AG04449 (cell line): ENCODE measurements at regions of chr11 and their contacts with region 1.

Region 1: GRCh38 chr11:9314291-9315036 is at the start of gene TMEM41B:
- DNase-seq: peak; percentile 90
- H3K4me3 ChIP-seq: peak within 1 kb of the TSS; percentile 94
- CTCF ChIP-seq: no peak

Region 2: DNA sequence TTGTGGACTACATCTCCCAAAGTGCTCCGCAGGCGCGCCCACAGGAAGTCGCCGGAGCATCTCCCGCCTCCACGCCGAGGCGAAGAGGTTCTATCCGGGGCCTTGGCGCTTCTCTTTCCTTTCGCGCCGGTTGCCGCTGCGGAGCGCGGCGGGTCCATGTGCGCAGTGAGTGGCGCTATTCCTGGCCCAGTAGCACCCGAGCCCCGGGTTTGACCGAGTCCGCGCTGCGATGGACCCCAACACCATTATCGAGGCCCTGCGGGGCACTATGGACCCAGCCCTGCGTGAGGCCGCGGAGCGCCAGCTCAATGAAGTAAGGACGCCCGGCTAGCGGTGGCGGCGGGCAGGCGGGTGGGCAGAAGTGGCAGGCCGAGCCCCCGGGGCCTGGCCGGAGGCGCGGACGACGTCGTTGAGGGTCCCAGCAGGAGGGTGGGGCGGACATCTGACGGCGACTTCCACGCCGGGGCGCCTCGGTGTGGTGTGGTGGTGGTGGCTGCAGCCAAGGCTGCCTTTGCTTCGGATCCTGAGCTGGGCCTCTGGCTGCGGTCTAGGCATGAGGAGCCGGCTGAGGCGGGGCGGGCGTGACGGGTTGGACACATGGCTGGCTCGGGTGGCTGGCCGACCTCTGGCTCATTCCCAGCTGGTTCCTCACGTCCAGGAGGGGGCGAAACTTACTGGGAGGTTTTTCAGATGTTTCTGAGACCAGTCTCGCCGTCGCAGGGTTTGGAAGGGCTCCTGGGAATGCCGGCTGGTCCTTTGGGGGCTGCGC is 70.3 kb after region 1 on chr11 and contains the start of gene IPO7:
- CTCF ChIA-PET with region 1: interaction called, 5 read pairs
- POLR2A ChIA-PET with region 1: interaction called, 12 read pairs
- DNase-seq: no peak
- H3K4me3 ChIP-seq: peak within 1 kb of the TSS; percentile 87
- CTCF ChIP-seq: peak; percentile 60